ENCODE measurements at regions of chr11 and their contacts with region 1.

Region 1: GRCh38 chr11:72471005-72471898 is 36.9 kb upstream of the CLPB start:
- DNase-seq: peak; percentile 31 to 59
- ATAC-seq: peak; percentile 68 to 87 (median 76)
- H3K4me3 ChIP-seq: no peak overlapping the region
- H3K27ac ChIP-seq: no peak overlapping the region
- H3K4me1 ChIP-seq: peaks cover 0 to 12% (median 5%) of the 10 kb centered on the region in 9 donors
- H3K27me3 ChIP-seq: peaks cover 0 to 37% (median 16%) of the 10 kb centered on the region in 7 donors
- CTCF ChIP-seq: peak; percentile 40 to 89 (median 79)

Region 2: GRCh38 chr11:72425053-72425980 is 45.9 kb before region 1 on chr11:
- intact Hi-C with region 1: no loop called
- DNase-seq: peak in 1 of 2 donors; percentile 21
- ATAC-seq: peak in 5 of 8 donors; percentile 63 to 77 (median 71)
- H3K4me3 ChIP-seq: no peak overlapping the region
- H3K27ac ChIP-seq: peak overlapping the region in 2 of 10 donors; percentile 2 to 9
- H3K4me1 ChIP-seq: peaks cover 0 to 19% (median 9%) of the 10 kb centered on the region in 9 donors
- H3K27me3 ChIP-seq: no peaks in the 10 kb centered on the region
- CTCF ChIP-seq: peak in 1 of 9 donors; percentile 25

Region 3: DNA sequence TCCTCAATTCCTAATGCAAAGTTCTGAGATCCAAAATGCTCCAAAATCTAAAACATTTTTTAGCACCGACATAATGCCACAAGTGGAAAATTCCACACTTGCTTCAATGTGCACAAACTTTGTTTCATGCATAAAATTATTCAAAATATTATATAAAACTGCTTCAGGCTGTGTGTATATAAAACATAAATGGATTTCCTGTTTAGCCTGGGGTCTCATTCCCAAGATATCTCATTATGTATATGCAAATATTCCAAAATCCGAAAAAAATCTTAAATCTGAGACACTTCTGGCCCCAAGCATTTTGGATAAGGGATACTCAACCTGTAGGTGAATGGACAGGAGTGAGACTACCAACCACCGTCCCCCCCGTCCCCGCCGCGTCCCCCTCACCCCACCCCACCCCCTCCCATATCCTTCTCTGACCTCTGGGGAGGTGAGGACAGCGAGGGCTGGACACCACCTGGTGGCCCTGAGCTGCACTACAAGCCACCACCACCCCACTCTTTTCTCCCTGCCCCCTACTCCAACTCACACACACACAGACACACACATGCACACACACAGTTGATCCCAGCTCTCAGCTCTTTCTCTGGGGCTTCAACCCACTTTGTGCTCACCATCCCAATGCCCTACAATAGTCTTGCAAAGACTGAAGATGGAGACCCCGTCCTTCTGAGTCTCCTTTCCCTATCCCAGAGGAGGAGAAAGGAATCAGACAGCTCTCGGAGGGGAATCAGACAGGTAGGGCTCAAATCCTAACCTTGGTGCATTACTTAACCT is 102.0 kb after region 1 on chr11:
- intact Hi-C with region 1: loop called in 5 of 10 experiments (anchors 2 to 10 kb)
- DNase-seq: peak in 1 of 2 donors; percentile 49
- ATAC-seq: peak; percentile 55 to 75 (median 68)
- H3K4me3 ChIP-seq: no peak overlapping the region
- H3K27ac ChIP-seq: no peak overlapping the region
- H3K4me1 ChIP-seq: peaks cover 0 to 15% (median 0%) of the 10 kb centered on the region in 9 donors
- H3K27me3 ChIP-seq: peaks cover 0 to 3% (median 0%) of the 10 kb centered on the region in 7 donors
- CTCF ChIP-seq: peak; percentile 31 to 63 (median 53)

Region 4: GRCh38 chr11:72642884-72643511 is 171.7 kb after region 1 on chr11:
- intact Hi-C with region 1: loop called in 5 of 10 experiments (anchors 2 to 10 kb)
- DNase-seq: peak; percentile 38 to 73
- ATAC-seq: peak; percentile 70 to 82 (median 79)
- H3K4me3 ChIP-seq: peak overlapping the region; percentile 58 to 75 (median 72)
- H3K27ac ChIP-seq: peak overlapping the region in 9 of 10 donors; percentile 2 to 84 (median 59)
- H3K4me1 ChIP-seq: peaks cover 6 to 48% (median 25%) of the 10 kb centered on the region in 9 donors
- H3K27me3 ChIP-seq: peaks cover 0 to 44% (median 0%) of the 10 kb centered on the region in 7 donors
- CTCF ChIP-seq: peak; percentile 95 to 100 (median 99)

Region 5: DNA sequence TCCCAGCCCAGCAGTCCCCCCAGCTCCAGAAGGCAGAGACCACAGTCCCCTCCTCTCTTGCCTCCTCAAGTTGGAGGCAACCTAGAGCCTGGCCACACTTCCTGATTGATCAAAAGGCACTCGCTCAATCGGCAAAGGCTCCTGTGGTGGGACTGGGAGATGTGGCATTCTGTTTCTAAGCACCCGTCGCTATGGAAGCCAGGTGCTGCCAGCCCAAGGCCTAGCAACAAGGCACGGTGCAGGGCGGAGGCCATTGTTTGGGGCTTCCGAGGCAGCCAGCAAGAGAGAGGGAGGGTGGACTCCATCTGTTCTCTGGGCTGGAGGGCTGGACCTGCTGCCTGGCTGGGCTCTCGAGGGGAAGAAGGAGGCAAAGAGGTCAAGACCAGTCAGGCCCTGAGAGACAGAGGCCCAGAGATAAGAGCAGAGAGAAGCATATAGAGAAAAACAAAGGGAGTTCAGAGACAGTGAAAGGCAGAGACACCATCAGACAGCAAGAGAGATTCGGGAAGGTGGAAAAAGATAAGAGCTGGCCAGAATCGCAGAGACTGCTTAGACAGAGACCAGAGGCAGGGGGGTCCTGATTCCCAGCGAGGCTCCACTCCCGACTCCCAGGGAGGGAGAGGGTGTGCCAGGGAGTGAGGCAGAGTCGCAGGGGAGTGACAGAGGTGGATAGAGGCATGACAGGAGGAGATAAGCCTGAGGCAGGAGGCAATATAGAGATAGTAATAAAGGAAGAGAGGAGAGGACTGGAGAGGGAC is 181.8 kb after region 1 on chr11:
- intact Hi-C with region 1: loop called in 5 of 10 experiments (anchors 10 kb)
- DNase-seq: no peak
- ATAC-seq: no peak
- H3K4me3 ChIP-seq: no peak overlapping the region
- H3K27ac ChIP-seq: no peak overlapping the region
- H3K4me1 ChIP-seq: no peaks in the 10 kb centered on the region
- H3K27me3 ChIP-seq: no peaks in the 10 kb centered on the region
- CTCF ChIP-seq: no peak

Region 6: GRCh38 chr11:72676861-72677341 is 205.6 kb after region 1 on chr11:
- intact Hi-C with region 1: loop called in 8 of 10 experiments (anchors 5 to 10 kb)
- DNase-seq: peak; percentile 61 to 66
- ATAC-seq: peak; percentile 40 to 77 (median 64)
- H3K4me3 ChIP-seq: no peak overlapping the region
- H3K27ac ChIP-seq: no peak overlapping the region
- H3K4me1 ChIP-seq: peaks cover 0 to 30% (median 4%) of the 10 kb centered on the region in 9 donors
- H3K27me3 ChIP-seq: peaks cover 5 to 77% (median 66%) of the 10 kb centered on the region in 7 donors
- CTCF ChIP-seq: no peak

Region 7: GRCh38 chr11:72683782-72684200 is 212.5 kb after region 1 on chr11:
- intact Hi-C with region 1: loop called in 8 of 10 experiments (anchors 5 to 10 kb)
- DNase-seq: peak; percentile 43 to 73
- ATAC-seq: peak; percentile 39 to 71 (median 60)
- H3K4me3 ChIP-seq: no peak overlapping the region
- H3K27ac ChIP-seq: peak overlapping the region in 4 of 10 donors; percentile 14 to 75 (median 60)
- H3K4me1 ChIP-seq: peaks cover 10 to 69% (median 40%) of the 10 kb centered on the region in 9 donors
- H3K27me3 ChIP-seq: peaks cover 0 to 8% (median under 1%) of the 10 kb centered on the region in 7 donors
- CTCF ChIP-seq: peak; percentile 81 to 96 (median 89)